GM12878 (cell line): ENCODE measurements at regions of chr3 and their contacts with region 1.

Region 1: GRCh38 chr3:107619549-107619948 is 96.8 kb downstream of the BBX start:
- DNase-seq: no peak
- ATAC-seq: no peak
- H3K4me3 ChIP-seq: peak overlapping the region; percentile 43; the same call in 1 of the 2 replicates
- H3K27ac ChIP-seq: no peak overlapping the region
- H3K4me1 ChIP-seq: peaks cover 15% of the 10 kb centered on the region
- H3K27me3 ChIP-seq: no peaks in the 10 kb centered on the region
- CTCF ChIP-seq: no peak
- EP300 ChIP-seq: no peak
- POLR2A ChIP-seq: no peak
- RAD21 ChIP-seq: no peak

Region 2: GRCh38 chr3:107522510-107523288 is 96.8 kb before region 1 on chr3 and contains the start of gene BBX:
- CTCF ChIA-PET with region 1: no interaction called
- POLR2A ChIA-PET with region 1: no interaction called
- RAD21 ChIA-PET with region 1: no interaction called
- SMC1A ChIA-PET with region 1: no interaction called
- in situ Hi-C with region 1: no loop called
- intact Hi-C with region 1: no loop called
- DNase-seq: peak; percentile 97
- ATAC-seq: peak; percentile 89
- H3K4me3 ChIP-seq: peak within 1 kb of the TSS; percentile 85
- H3K27ac ChIP-seq: peak within 1 kb of the TSS; percentile 84
- H3K4me1 ChIP-seq: peaks cover 10% of the 10 kb centered on the region; the same call in 1 of the 2 replicates
- H3K27me3 ChIP-seq: no peaks in the 10 kb centered on the region
- CTCF ChIP-seq: no peak
- EP300 ChIP-seq: no peak
- POLR2A ChIP-seq: peak; percentile 75
- RAD21 ChIP-seq: no peak
- polyA plus RNA-seq, gene BBX: 17.5 to 37.3 TPM

Region 3: GRCh38 chr3:107604057-107604822 is 15.3 kb before region 1 on chr3:
- CTCF ChIA-PET with region 1: interaction called, 47 read pairs
- POLR2A ChIA-PET with region 1: interaction called, 11 read pairs
- RAD21 ChIA-PET with region 1: interaction called, 5 read pairs
- SMC1A ChIA-PET with region 1: interaction called, 15 read pairs
- in situ Hi-C with region 1: no loop called
- intact Hi-C with region 1: no loop called
- DNase-seq: no peak
- ATAC-seq: no peak
- H3K4me3 ChIP-seq: no peak overlapping the region
- H3K27ac ChIP-seq: no peak overlapping the region
- H3K4me1 ChIP-seq: no peaks in the 10 kb centered on the region; the same call in 1 of the 2 replicates
- H3K27me3 ChIP-seq: no peaks in the 10 kb centered on the region
- CTCF ChIP-seq: no peak
- EP300 ChIP-seq: no peak
- POLR2A ChIP-seq: no peak
- RAD21 ChIP-seq: no peak

Region 4: GRCh38 chr3:107633327-107634098 is 14.0 kb after region 1 on chr3:
- CTCF ChIA-PET with region 1: interaction called, 8 read pairs
- POLR2A ChIA-PET with region 1: no interaction called
- RAD21 ChIA-PET with region 1: interaction called, 6 read pairs
- SMC1A ChIA-PET with region 1: interaction called, 10 read pairs
- in situ Hi-C with region 1: no loop called
- intact Hi-C with region 1: no loop called
- DNase-seq: peak; percentile 56
- ATAC-seq: peak; percentile 94
- H3K4me3 ChIP-seq: peak overlapping the region; percentile 40; the same call in 1 of the 2 replicates
- H3K27ac ChIP-seq: peak overlapping the region; percentile 63
- H3K4me1 ChIP-seq: peaks cover 20% of the 10 kb centered on the region
- H3K27me3 ChIP-seq: no peaks in the 10 kb centered on the region
- CTCF ChIP-seq: no peak
- EP300 ChIP-seq: peak; percentile 63 to 77
- POLR2A ChIP-seq: no peak
- RAD21 ChIP-seq: no peak